ENCODE measurements at regions of chr11 and their contacts with region 1.

Region 1: DNA sequence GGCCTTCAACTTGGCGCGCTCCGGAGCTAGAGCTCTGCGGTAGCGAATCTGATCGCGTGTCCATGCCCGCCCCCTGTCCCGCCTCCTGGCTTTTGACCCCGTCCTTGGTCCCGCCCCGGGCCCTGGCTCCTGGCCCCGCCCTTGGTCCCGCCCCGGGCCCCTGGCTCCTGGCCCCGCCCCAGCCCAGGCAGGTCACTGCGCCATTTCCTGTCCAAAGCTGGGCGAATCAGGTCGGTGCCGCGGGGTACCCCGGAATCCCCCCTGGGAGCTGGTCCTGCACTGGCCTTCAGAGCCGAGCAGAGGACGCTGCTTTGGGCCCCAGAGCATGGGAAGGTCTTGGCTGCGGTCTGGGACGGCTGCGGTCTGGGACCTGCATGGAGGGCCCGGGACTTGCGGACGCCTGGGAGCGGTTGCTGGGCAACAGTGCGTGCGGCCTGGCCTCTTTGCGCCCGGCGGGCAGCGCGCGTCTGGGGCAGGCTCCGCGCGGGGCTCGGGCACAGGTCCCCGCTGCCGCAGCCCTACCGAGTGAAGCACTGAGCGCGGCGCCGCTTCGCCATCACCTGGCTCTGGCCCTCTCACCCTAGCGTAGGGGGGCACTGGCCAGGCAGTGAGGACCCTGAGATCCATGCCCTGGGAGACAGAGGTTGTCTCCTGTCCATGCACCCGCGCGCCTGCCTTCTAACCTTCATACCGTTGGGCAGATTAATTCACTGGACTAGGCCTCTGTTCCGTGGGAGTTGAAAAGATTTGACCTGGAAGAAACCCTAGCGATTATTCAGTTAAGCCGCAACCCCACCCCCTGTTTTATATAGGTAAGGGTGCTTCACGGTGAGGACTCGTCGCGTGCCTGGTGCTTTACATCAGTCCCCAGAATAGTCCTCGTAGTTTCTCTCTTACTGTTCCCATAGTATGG is at the start of gene TTC12:
- DNase-seq: peak; percentile 98
- ATAC-seq: peak; percentile 99
- H3K4me3 Mint-ChIP-seq: peak within 1 kb of the TSS; percentile 85
- H3K27ac Mint-ChIP-seq: peak within 1 kb of the TSS; percentile 83
- H3K4me1 Mint-ChIP-seq: peaks cover 19% of the 10 kb centered on the region
- H3K27me3 Mint-ChIP-seq: no peaks in the 10 kb centered on the region
- CTCF ChIP-seq: no peak
- total RNA-seq, gene TTC12: 21.3 and 25.2 TPM in 2 replicates

Region 2: DNA sequence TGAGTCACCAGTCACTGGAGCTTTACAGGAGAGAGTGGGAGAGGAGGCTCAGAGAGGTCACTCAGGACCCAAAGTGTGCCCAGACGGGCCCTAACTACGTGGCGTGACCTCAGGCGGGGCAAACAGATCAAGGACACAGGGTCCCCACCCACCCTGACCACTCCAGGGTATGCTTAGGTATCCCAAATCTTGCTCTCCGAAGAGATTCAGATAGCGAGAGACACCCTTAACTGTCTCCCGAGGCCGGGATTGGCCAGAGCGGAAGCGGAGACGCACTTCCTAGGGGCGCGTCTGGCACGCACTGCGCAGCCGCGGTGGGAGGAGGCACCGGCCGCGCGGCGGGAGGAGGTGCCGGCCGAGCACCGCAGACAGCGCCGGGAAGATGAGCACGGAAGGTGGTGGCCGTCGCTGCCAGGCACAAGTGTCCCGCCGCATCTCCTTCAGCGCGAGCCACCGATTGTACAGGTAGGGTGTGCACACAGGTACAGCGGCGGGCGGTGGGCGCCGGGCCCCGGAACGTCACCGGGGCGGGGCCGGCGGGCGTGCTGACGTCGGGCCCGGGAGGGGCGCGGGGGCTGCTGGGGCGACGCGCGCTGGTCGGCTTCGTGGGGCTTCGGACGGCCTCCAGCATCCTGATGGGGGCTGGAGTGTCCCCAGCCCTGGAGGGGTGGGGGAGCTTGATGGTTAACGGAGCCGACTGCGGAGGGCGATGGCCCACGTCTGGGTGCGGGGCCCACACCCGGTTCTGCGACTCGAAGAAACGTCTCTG is 1088.4 kb before region 1 on chr11 and contains the start of gene PTS:
- CTCF ChIA-PET with region 1: no interaction called
- POLR2A ChIA-PET with region 1: interaction called, 10 read pairs
- intact Hi-C with region 1: loop called (anchors 1 kb)
- DNase-seq: peak; percentile 87
- ATAC-seq: peak; percentile 93
- H3K4me3 Mint-ChIP-seq: peak within 1 kb of the TSS; percentile 92
- H3K27ac Mint-ChIP-seq: peak within 1 kb of the TSS; percentile 96
- H3K4me1 Mint-ChIP-seq: peaks cover 13% of the 10 kb centered on the region
- H3K27me3 Mint-ChIP-seq: no peaks in the 10 kb centered on the region
- CTCF ChIP-seq: no peak
- total RNA-seq, gene PTS: 22.7 and 30.4 TPM in 2 replicates

Region 3: GRCh38 chr11:112844517-112844916 is 470.1 kb before region 1 on chr11:
- CTCF ChIA-PET with region 1: no interaction called
- POLR2A ChIA-PET with region 1: no interaction called
- intact Hi-C with region 1: no loop called
- DNase-seq: no peak
- ATAC-seq: no peak
- H3K4me3 Mint-ChIP-seq: no peak overlapping the region
- H3K27ac Mint-ChIP-seq: no peak overlapping the region
- H3K4me1 Mint-ChIP-seq: no peaks in the 10 kb centered on the region
- H3K27me3 Mint-ChIP-seq: no peaks in the 10 kb centered on the region
- CTCF ChIP-seq: no peak

Region 4: DNA sequence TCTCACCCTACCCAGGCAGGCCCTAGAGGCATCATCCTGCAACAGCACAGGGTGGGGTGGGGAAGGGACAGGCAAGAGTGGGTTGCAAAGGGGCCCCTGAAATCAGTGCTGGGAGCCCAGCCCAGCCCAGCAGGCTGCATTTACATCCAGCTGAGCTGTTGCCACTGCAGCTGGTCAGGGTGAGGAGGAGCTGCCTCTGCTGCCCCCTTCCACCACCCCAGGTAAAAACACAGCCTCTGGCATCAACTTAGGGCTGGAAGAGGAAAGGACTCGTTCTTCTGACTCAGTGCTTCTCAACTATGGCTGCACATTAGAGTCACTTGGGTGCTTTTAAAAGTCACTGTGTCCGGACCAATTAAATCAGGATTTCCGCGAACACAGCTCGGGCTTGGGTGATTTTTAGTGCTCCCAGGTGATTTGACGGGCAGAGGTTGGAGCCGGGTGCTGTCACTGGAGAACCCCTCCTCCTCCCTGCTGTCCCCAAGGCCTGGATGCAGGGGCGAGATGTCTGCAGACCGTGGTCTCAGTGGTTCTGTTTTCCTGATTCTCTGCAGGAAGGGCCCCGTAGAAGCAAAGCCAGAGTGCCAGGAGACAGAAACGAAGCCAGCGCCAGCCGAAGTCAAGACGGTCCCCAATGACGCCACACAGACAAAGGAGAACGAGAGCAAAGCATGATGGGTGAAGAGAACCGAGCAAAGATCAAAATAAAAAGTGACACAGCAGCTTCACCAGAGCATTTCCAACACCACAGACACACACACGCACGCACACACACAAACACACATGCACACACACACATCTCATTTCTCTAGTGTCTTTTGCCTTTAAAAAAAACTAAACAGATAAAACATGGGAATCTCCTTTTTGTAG is 39.7 kb before region 1 on chr11:
- CTCF ChIA-PET with region 1: no interaction called
- POLR2A ChIA-PET with region 1: no interaction called
- intact Hi-C with region 1: no loop called
- DNase-seq: no peak
- ATAC-seq: no peak
- H3K4me3 Mint-ChIP-seq: no peak overlapping the region
- H3K27ac Mint-ChIP-seq: no peak overlapping the region
- H3K4me1 Mint-ChIP-seq: no peaks in the 10 kb centered on the region
- H3K27me3 Mint-ChIP-seq: peaks cover 2% of the 10 kb centered on the region
- CTCF ChIP-seq: no peak

Region 5: DNA sequence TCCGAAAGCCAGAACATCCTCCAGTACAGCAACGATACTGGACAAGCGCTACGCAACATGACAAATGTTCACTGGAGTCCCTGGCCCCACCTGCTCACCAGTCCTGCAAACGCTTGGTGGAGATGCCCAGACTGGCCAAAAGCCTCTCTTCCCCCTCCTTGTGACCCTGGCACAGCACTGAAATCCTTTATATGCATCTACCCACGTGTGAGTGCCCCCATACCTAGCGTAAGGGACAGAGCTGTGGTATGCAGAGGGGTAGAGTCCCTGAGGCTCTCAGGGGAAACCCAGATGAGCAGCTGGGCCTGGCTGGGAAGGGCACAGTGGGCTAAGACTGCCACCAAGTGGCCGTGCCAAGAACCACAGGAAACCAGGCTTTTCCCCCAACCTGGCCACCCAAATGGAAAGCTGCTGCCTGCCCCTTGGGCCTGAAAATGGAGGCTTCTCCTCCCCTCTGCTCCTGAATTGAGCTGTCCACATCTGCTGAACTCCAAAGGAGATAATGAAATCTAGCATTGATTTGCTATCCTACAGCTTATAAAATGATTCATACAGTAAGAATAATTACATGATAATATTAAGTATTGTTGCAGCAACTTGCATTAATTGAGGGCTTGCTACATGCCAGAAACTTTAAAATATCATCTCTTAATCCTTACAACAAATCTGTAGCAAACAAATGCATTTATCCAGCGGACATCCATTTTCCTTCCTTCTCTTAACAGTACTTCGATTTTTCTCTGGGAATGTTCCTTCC is 25.0 kb before region 1 on chr11:
- CTCF ChIA-PET with region 1: interaction called, 12 read pairs
- POLR2A ChIA-PET with region 1: no interaction called
- intact Hi-C with region 1: no loop called
- DNase-seq: peak; percentile 66
- ATAC-seq: peak; percentile 100
- H3K4me3 Mint-ChIP-seq: no peak overlapping the region
- H3K27ac Mint-ChIP-seq: no peak overlapping the region
- H3K4me1 Mint-ChIP-seq: peaks cover 2% of the 10 kb centered on the region
- H3K27me3 Mint-ChIP-seq: peaks cover 4% of the 10 kb centered on the region
- CTCF ChIP-seq: peak; percentile 83

Region 6: GRCh38 chr11:113376156-113376555 is 61.5 kb after region 1 on chr11:
- CTCF ChIA-PET with region 1: no interaction called
- POLR2A ChIA-PET with region 1: no interaction called
- intact Hi-C with region 1: loop called (anchors 2 kb)
- DNase-seq: no peak
- ATAC-seq: peak; percentile 95
- H3K4me3 Mint-ChIP-seq: peak overlapping the region; percentile 32
- H3K27ac Mint-ChIP-seq: peak overlapping the region; percentile 85
- H3K4me1 Mint-ChIP-seq: peaks cover 23% of the 10 kb centered on the region
- H3K27me3 Mint-ChIP-seq: no peaks in the 10 kb centered on the region
- CTCF ChIP-seq: no peak

Region 7: GRCh38 chr11:113603277-113604059 is 288.8 kb after region 1 on chr11:
- CTCF ChIA-PET with region 1: no interaction called
- POLR2A ChIA-PET with region 1: no interaction called
- intact Hi-C with region 1: no loop called
- DNase-seq: no peak
- ATAC-seq: no peak
- H3K4me3 Mint-ChIP-seq: no peak overlapping the region
- H3K27ac Mint-ChIP-seq: no peak overlapping the region
- H3K4me1 Mint-ChIP-seq: no peaks in the 10 kb centered on the region
- H3K27me3 Mint-ChIP-seq: peaks cover 8% of the 10 kb centered on the region
- CTCF ChIP-seq: no peak

Region 8: DNA sequence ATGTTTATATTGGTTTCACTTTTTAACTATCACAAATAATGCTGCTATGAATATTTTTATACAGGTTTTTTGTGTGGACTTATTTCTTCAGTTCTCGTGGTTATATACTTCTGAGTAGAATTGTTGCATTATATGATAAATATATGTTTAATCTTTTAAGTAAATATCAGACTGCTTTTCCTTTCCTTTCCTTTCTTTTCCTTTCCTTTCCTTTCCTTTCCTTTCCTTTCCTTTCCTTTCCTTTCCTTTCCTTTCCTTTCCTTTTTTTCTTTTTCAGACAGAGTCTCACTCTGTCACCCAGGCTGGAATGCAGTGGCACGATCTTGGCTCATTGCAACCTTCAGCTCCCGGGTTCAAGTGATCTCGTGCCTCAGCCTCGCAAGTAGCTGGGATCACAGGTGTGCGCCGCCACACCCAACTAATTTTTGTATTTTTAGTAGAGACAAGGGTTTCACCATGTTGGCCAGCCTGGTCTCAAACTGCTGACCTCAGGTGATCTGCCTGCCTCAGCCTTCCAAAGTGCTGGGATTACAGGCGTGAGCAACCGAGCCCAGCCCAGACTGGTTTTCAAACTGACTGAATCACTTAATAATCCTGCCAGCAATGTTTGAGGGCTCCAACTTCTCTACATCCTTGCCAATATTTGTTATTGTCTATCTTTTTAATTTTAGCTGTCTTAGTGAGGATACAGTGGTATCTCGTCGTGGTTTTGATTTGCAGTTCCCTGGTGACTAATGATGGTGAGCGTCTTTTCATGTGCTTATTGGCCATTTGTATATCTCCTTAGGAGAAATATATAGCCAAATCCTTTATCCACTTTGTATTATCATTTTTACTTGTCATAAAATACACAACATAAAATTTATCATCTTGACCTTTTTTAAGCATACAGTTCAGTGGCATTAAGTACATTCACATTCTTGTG is 611.9 kb after region 1 on chr11:
- CTCF ChIA-PET with region 1: no interaction called
- POLR2A ChIA-PET with region 1: no interaction called
- intact Hi-C with region 1: no loop called
- DNase-seq: no peak
- ATAC-seq: no peak
- H3K4me3 Mint-ChIP-seq: no peak overlapping the region
- H3K27ac Mint-ChIP-seq: peak overlapping the region; percentile 31
- H3K4me1 Mint-ChIP-seq: peaks cover 5% of the 10 kb centered on the region
- H3K27me3 Mint-ChIP-seq: peaks cover 2% of the 10 kb centered on the region
- CTCF ChIP-seq: no peak

Region 9: GRCh38 chr11:114400217-114400914 is 1085.7 kb after region 1 on chr11 and contains the starts of genes C11orf71 and RBM7:
- CTCF ChIA-PET with region 1: no interaction called
- POLR2A ChIA-PET with region 1: no interaction called
- intact Hi-C with region 1: loop called (anchors 1 kb)
- DNase-seq: peak; percentile 93
- ATAC-seq: peak; percentile 93
- H3K4me3 Mint-ChIP-seq: peak within 1 kb of the TSS; percentile 96
- H3K27ac Mint-ChIP-seq: peak within 1 kb of the TSS; percentile 98
- H3K4me1 Mint-ChIP-seq: peaks cover 50% of the 10 kb centered on the region
- H3K27me3 Mint-ChIP-seq: no peaks in the 10 kb centered on the region
- CTCF ChIP-seq: no peak
- total RNA-seq, gene C11orf71: 9.5 and 11.1 TPM in 2 replicates
- total RNA-seq, gene RBM7: 33.6 and 34.1 TPM in 2 replicates

Measured in activated B cell treated with CpG ODN at 0.5 μM for 24 hours (primary cell).